ENCODE measurements at regions of chr13 and their contacts with region 1.

Region 1: GRCh38 chr13:28792992-28793391 is 27.1 kb upstream of the MTUS2 start:
- DNase-seq: no peak
- H3K4me3 ChIP-seq: no peak overlapping the region
- H3K27ac ChIP-seq: no peak overlapping the region
- H3K4me1 ChIP-seq: no peaks in the 10 kb centered on the region
- H3K27me3 ChIP-seq: peaks cover 22% of the 10 kb centered on the region
- CTCF ChIP-seq: no peak
- EP300 ChIP-seq: no peak
- POLR2A ChIP-seq: no peak

Region 2: GRCh38 chr13:28324181-28324789 is 468.7 kb before region 1 on chr13:
- in situ Hi-C with region 1: loop called (anchors 10 to 25 kb)
- intact Hi-C with region 1: no loop called
- DNase-seq: peak; percentile 55
- H3K4me3 ChIP-seq: no peak overlapping the region
- H3K27ac ChIP-seq: no peak overlapping the region
- H3K4me1 ChIP-seq: no peaks in the 10 kb centered on the region
- H3K27me3 ChIP-seq: no peaks in the 10 kb centered on the region
- CTCF ChIP-seq: peak; percentile 63 to 70 (median 67)
- EP300 ChIP-seq: no peak
- POLR2A ChIP-seq: no peak

Region 3: DNA sequence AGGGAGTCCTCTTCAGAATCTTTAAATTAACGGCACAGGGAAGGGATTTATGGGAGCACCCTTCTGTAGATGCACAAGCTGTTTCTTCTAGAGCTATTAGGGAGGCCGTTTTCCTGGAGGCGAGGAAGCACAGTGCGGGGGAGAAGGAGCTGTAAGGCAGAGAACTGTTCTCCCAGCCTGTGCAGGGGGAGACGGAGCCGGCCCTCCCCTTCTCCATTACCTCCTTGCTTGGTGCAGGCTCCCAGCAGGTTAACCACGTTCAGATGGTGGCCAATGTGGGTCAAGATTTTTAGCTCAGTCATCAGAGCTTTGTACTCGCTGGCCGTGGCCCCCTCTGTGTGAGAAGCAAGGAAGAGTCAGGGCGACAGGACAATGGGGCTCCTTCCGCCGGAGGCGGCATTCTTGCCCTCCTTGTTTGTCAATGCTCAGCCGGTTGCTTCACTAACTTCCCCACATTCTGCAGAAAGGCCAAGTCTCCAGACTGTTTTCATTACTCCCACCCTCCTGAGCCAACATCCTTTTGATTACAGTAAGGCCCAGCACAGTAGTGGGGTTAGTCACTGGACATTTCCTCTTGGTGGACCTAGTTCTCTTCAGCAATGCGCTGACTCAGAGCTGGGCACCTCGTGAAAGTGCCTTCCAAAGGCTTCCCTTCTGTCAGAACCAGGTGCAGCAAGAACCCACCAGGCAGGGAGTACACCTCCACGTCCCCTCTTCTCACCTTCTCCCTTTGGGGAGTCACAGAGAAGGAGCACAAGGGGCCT is 463.4 kb before region 1 on chr13:
- in situ Hi-C with region 1: loop called (anchors 10 to 25 kb)
- intact Hi-C with region 1: no loop called
- DNase-seq: no peak
- H3K4me3 ChIP-seq: no peak overlapping the region
- H3K27ac ChIP-seq: no peak overlapping the region
- H3K4me1 ChIP-seq: no peaks in the 10 kb centered on the region
- H3K27me3 ChIP-seq: no peaks in the 10 kb centered on the region
- CTCF ChIP-seq: no peak
- EP300 ChIP-seq: no peak
- POLR2A ChIP-seq: no peak

Region 4: DNA sequence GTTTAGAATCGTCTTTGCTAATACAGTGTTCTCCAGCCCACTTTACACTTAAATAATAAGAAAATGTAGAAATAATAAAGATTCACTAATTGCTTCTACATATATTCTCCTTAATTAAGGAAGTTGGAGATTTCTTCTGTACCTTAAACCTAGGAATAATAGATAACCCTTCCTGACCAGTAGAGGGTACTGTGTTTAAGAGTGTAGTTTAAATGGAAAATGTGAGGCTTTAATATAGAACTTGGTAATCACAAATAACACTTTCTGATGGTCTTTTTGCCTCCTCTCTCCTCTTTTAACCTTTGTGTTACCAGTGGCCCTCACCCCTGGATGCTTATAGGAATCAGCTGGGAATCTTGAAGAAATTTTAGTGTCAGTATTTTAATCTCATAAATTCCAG is 113.4 kb before region 1 on chr13:
- in situ Hi-C with region 1: loop called in 3 of 4 experiments (anchors 10 kb)
- intact Hi-C with region 1: no loop called
- DNase-seq: no peak
- H3K4me3 ChIP-seq: no peak overlapping the region
- H3K27ac ChIP-seq: no peak overlapping the region
- H3K4me1 ChIP-seq: no peaks in the 10 kb centered on the region
- H3K27me3 ChIP-seq: no peaks in the 10 kb centered on the region
- CTCF ChIP-seq: peak; percentile 11 to 32 (median 28)
- EP300 ChIP-seq: no peak
- POLR2A ChIP-seq: no peak

Region 5: GRCh38 chr13:28778308-28779215 is 14.4 kb before region 1 on chr13:
- in situ Hi-C with region 1: no loop called
- intact Hi-C with region 1: no loop called
- DNase-seq: no peak
- H3K4me3 ChIP-seq: no peak overlapping the region
- H3K27ac ChIP-seq: no peak overlapping the region
- H3K4me1 ChIP-seq: no peaks in the 10 kb centered on the region
- H3K27me3 ChIP-seq: no peaks in the 10 kb centered on the region
- CTCF ChIP-seq: no peak
- EP300 ChIP-seq: no peak
- POLR2A ChIP-seq: no peak